Heart left ventricle (tissue), 16 donors: ENCODE measurements at regions of chr20 and their contacts with region 1.

Region 1: DNA sequence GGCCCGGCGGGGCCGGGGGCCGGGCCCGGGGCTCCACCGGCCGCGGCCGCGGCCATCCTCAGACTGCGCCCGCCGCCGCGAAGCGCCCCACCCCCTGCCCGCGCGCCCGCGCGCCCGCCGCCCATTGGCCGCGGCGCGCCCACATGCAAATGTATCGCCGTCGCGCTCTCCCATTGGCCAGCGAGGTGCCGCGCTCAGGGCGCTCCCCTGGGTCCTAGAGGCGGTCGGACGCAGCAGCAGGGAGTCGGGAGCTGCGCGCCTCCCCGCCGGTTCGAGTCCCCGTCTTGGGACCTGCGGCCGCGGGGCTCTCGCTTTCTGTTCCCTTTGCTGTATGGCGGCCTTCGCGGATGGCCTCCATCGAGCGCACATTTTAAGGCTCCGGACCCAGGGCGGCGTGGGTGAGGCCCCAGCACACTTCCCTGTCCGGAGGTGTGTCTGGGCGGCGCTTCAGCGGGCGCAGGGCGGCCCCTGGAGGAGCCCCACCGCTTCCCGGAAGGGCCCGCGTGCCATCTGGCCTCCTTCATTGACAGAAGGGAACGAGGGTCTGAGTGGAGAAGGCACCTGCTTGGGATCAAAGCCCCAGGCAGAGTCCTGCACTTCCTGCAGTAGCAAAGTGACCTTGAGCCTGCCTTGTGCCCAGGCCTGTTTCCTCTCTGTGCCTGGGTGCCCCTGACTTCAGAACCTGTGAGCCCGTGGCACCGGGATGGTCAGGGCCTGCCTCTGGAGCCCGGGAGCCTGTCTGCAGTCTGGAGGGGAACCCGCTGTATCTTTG is at the start of gene CABLES2:
- DNase-seq: peak; percentile 95 to 97 (median 97)
- ATAC-seq: peak; percentile 82 to 93 (median 90)
- H3K4me3 ChIP-seq: peak within 1 kb of the TSS; percentile 15 to 79 (median 64)
- H3K27ac ChIP-seq: peak within 1 kb of the TSS in 9 of 12 donors; percentile 35 to 80 (median 52)
- H3K4me1 ChIP-seq: peaks cover 0 to 33% (median 24%) of the 10 kb centered on the region in 12 donors
- H3K27me3 ChIP-seq: no peaks in the 10 kb centered on the region
- CTCF ChIP-seq: peak in 4 of 12 donors; percentile 4 to 35 (median 20)
- POLR2A ChIP-seq: peak in 1 of 2 donors; percentile 32
- total RNA-seq, gene CABLES2: 6.1 to 12.0 (median 8.8) TPM

Region 2: GRCh38 chr20:62025832-62026563 is 381.4 kb before region 1 on chr20:
- intact Hi-C with region 1: loop called in 3 of 10 experiments (anchors 5 to 10 kb)
- DNase-seq: peak in 4 of 5 donors; percentile 39 to 54 (median 44)
- ATAC-seq: peak; percentile 60 to 87 (median 74)
- H3K4me3 ChIP-seq: peak overlapping the region in 1 of 12 donors; percentile 13
- H3K27ac ChIP-seq: peak overlapping the region in 6 of 12 donors; percentile 10 to 47 (median 20)
- H3K4me1 ChIP-seq: peaks cover 8 to 50% (median 30%) of the 10 kb centered on the region in 12 donors
- H3K27me3 ChIP-seq: no peaks in the 10 kb centered on the region
- CTCF ChIP-seq: peak; percentile 29 to 75 (median 64)
- POLR2A ChIP-seq: no peak

Region 3: GRCh38 chr20:62454904-62455636 is 47.7 kb after region 1 on chr20:
- intact Hi-C with region 1: loop called in 1 of 10 experiments (anchors 5 kb)
- DNase-seq: no peak
- ATAC-seq: no peak
- H3K4me3 ChIP-seq: no peak overlapping the region
- H3K27ac ChIP-seq: no peak overlapping the region
- H3K4me1 ChIP-seq: peaks cover 0 to 1% (median 0%) of the 10 kb centered on the region in 12 donors
- H3K27me3 ChIP-seq: peaks cover 0 to 28% (median 6%) of the 10 kb centered on the region in 9 donors
- CTCF ChIP-seq: no peak
- POLR2A ChIP-seq: no peak

Region 4: GRCh38 chr20:62611819-62612218 is 204.4 kb after region 1 on chr20:
- intact Hi-C with region 1: loop called in 7 of 10 experiments (anchors 2 to 10 kb)
- DNase-seq: peak in 1 of 5 donors; percentile 52
- ATAC-seq: no peak
- H3K4me3 ChIP-seq: no peak overlapping the region
- H3K27ac ChIP-seq: no peak overlapping the region
- H3K4me1 ChIP-seq: peaks cover 0 to 9% (median 6%) of the 10 kb centered on the region in 12 donors
- H3K27me3 ChIP-seq: peaks cover 0 to 6% (median 0%) of the 10 kb centered on the region in 9 donors
- CTCF ChIP-seq: no peak
- POLR2A ChIP-seq: no peak

Region 5: GRCh38 chr20:62793912-62794724 is 386.7 kb after region 1 on chr20:
- intact Hi-C with region 1: loop called in 2 of 10 experiments (anchors 5 to 10 kb)
- DNase-seq: peak; percentile 96 to 100 (median 97)
- ATAC-seq: peak; percentile 89 to 94 (median 92)
- H3K4me3 ChIP-seq: peak overlapping the region; percentile 31 to 97 (median 78)
- H3K27ac ChIP-seq: peak overlapping the region; percentile 14 to 96 (median 92)
- H3K4me1 ChIP-seq: peaks cover 4 to 50% (median 23%) of the 10 kb centered on the region in 12 donors
- H3K27me3 ChIP-seq: no peaks in the 10 kb centered on the region
- CTCF ChIP-seq: no peak
- POLR2A ChIP-seq: peak; percentile 71 to 93